OCI-LY7 (cell line): ENCODE measurements at regions of chr19 and their contacts with region 1.

Region 1: DNA sequence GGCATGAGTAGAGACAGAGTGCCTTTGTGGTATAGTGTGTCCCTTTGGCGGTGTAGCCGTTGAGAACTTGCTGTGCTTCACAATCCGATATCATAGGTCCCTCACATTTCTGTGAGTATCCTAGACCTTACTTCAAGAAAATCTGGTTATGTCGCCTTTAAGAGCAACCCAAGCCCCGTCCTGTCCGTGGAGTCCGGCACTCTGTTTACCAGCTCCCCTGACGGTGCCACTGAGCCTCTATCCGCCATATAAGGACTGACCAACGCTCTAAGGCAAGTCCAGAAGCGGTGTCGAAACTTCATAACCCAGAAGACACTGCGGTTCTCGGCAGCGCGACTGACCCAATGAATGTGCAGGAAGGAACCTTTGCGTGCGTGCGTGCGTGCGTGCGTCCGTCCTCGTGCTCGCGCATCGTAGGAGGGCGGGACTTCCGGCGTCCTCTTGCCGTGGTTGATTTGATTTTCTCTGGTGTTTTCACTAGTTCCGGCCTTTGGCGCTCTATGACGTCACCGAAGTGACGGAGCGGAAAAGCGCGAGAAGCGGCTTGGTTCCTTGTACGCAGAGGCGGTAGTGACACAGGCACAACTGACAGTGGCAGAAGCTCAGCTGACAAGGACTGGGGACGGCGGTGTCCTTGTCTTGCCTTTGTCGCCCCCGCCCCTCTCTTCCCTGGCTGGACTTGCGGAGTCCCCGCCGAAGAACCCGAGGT is at the starts of genes TRAPPC2B and ZNF547:
- DNase-seq: peak; percentile 99
- H3K4me3 ChIP-seq: peak within 1 kb of the TSS; percentile 83
- H3K27ac ChIP-seq: no peak within 1 kb of the TSS
- H3K4me1 ChIP-seq: peaks cover 12% of the 10 kb centered on the region
- CTCF ChIP-seq: no peak
- total RNA-seq, gene TRAPPC2B: 12.7 and 19.3 TPM in 2 replicates
- total RNA-seq, gene ZNF547: 2.8 and 3.9 TPM in 2 replicates

Region 2: DNA sequence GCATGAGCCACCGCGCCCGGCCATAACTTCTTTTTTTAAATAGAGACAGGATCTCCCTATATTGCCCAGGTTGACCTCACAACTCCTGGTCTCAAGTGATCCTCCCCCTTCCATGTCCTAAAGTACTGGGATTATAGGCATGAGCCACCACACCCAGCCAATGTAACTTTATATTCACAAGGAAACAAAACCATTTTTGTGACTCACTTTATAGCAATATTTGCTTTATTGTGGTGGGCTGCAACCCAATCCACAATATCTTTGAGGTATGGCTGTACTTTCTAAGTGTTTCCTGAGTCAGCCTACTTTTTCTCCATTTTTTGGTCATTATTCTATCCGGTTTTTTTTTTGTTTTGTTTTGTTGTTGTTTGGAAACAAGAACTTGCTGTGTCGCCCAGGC is 210.2 kb before region 1 on chr19:
- CTCF ChIA-PET with region 1: no interaction called
- POLR2A ChIA-PET with region 1: no interaction called
- intact Hi-C with region 1: no loop called
- DNase-seq: no peak
- H3K4me3 ChIP-seq: no peak overlapping the region
- H3K27ac ChIP-seq: no peak overlapping the region
- H3K4me1 ChIP-seq: no peaks in the 10 kb centered on the region
- CTCF ChIP-seq: no peak

Region 3: DNA sequence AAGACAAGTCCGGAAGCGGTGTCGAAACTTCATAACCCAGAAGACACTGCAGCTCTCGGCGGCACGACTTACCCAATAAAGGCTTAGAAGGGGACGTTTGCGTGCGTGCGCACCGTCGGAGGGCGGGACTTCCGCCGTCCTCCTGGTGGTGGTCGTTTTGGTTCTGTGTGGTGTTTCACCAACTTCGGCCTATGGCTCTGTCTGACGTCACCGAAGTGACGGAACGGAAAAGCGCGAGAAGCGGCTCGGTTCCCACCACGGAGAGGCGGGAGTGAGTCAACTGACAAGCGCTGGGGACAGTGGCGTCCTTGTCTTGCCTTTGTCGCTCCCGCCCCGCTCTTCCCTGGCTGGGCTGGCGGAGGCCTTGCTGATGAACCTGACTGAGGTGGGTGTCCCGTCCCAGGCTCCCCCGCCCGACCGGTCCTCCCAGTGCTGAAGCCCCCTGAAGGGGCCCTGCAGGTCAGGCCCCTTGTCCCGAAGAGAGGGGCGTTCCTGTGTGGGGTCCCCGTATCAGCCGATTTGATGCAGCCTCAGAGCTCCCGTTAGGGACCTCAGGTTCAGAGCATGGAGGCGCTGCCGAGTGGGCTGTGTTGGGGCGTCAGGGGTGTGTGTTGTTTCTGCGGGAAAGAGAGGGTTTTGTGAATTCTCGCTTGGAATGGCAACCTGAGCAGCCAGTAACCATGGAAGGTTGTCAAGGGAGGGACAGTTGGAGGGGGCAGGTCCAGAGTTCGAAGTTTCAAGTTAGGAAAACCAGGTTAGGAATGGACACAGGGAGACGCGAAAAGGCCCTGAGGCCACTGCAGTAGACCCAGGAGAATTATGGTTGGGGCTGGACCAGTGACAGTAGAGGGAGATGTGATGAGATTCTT is 26.8 kb after region 1 on chr19 and contains the start of gene ZNF548:
- CTCF ChIA-PET with region 1: no interaction called
- POLR2A ChIA-PET with region 1: interaction called, 3 read pairs
- intact Hi-C with region 1: loop called (anchors 1 kb)
- DNase-seq: peak; percentile 98
- H3K4me3 ChIP-seq: peak within 1 kb of the TSS; percentile 86
- H3K27ac ChIP-seq: peak within 1 kb of the TSS; percentile 34
- H3K4me1 ChIP-seq: peaks cover 16% of the 10 kb centered on the region
- CTCF ChIP-seq: 0 out of 2 replicates have a peak, but pooled peaks have one; percentile 46
- total RNA-seq, gene ZNF548: 18.9 and 23.9 TPM in 2 replicates

Region 4: DNA sequence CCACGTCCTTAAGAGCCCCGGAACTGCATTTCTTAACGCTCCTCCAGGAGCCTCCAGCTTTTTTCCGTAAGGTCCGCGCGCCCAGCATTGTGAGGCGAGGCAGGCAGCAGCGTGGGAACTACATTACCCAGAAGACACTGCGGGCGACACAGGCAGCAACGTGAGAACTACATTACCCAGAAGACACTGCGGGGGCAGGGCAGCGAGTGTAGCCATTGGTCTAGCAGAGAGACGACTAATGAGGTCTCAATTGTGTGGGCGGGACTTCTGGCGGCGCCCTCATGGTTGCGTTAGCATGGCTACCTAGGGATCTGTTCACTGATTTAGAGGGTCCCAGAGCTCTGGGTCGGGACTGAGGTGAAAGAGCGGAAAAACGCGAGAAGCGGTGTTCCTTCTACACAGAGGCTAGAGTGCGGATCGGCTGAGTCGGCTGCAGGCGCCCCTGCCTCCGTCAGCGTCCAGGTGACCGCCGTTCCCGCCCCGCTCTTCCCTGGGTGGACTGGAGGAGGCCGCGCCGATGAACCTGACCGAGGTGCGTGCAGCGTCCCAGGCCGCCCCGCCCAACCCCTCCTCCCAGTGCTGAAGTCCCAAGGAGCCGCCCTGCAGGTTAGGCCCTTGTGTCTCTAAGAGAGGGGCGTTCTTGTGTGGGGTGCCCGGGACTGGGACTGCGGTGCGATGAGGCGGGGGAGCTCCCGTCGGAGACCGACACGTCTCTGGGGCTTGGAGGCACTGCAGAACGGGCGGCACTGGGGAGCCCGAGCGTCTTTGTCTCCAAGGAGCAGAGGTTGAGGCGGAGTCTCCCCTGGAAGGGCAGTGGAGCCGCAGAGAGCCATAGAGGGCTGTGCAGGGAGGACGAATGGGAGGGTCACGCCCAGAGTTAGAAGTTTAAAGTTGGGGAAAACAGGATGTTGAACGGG is 72.2 kb after region 1 on chr19 and contains the start of gene ZNF749:
- CTCF ChIA-PET with region 1: no interaction called
- POLR2A ChIA-PET with region 1: no interaction called
- intact Hi-C with region 1: no loop called
- DNase-seq: peak; percentile 98
- H3K4me3 ChIP-seq: peak within 1 kb of the TSS; percentile 88
- H3K27ac ChIP-seq: no peak within 1 kb of the TSS
- H3K4me1 ChIP-seq: peaks cover 16% of the 10 kb centered on the region
- CTCF ChIP-seq: no peak
- total RNA-seq, gene ZNF749: 27.1 and 30.1 TPM in 2 replicates